ENCODE measurements at regions of chr16 and their contacts with region 1.

Region 1: DNA sequence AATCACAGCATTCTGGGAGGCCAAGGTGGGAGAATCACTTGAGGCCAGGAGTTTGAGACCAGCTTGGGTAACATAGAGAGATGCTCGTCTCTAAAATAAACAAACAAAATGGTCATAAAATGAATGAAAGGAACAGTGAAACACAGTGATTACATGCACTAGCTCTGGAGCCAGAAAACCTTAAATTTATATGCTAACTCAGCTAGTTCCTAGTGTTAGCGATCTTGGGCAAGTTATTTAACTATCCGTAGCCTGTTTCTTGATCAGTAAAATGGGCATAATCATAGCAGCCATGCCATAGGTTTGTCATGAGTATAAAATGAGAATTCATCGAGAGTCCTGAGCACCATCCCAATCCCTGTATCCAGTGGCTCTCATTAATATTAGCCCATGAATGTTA is 271.0 kb downstream of the GRIN2A start:
- DNase-seq: no peak
- ATAC-seq: no peak
- H3K4me3 Mint-ChIP-seq: no peak overlapping the region
- H3K27ac Mint-ChIP-seq: no peak overlapping the region
- H3K4me1 Mint-ChIP-seq: no peaks in the 10 kb centered on the region
- H3K27me3 Mint-ChIP-seq: peaks cover 2% of the 10 kb centered on the region

Region 2: DNA sequence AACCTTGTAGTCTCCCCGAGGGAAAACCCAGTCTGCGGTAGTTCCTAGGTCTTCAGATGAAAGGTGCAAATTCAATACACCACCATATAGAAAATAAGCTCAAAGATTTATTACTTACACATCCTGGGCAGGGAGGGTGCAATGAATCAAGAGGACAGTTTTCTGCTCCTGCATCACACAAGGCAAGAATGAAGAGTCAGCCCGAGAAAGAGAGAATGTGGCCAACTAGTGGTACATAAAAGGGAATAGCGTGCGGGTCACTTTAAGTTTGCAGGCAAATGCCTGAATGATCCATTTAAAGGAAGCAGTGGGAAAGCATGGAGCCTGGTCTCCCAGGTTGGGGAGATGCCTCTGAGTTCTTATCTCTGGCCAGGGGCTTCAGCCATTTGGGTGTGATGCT is 132.4 kb before region 1 on chr16:
- CTCF ChIA-PET with region 1: no interaction called
- POLR2A ChIA-PET with region 1: no interaction called
- intact Hi-C with region 1: no loop called
- DNase-seq: no peak
- ATAC-seq: no peak
- H3K4me3 Mint-ChIP-seq: no peak overlapping the region
- H3K27ac Mint-ChIP-seq: no peak overlapping the region
- H3K4me1 Mint-ChIP-seq: no peaks in the 10 kb centered on the region
- H3K27me3 Mint-ChIP-seq: no peaks in the 10 kb centered on the region

Region 3: DNA sequence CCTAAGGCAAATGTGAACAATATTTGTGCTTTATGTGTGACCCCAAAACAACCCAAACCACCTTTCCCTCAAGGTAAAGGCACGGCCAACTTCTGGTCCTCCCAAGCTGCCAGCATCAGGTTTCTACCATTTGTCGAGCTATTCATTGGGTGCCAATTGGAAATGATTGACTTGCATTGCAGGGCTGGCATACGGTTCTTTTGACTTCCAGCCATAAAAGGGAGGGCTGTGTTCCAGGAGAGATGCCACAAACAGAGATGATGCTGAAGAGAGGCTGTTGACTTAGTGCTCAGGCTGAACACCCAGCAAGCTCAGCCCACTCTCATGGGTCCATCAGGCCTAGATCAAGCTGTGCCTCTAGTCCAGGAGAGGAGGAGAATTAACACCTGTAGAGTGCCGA is 18.6 kb after region 1 on chr16:
- CTCF ChIA-PET with region 1: interaction called, 5 read pairs
- POLR2A ChIA-PET with region 1: no interaction called
- intact Hi-C with region 1: loop called in 1 of 2 experiments (anchors 2 kb)
- DNase-seq: no peak
- ATAC-seq: no peak
- H3K4me3 Mint-ChIP-seq: no peak overlapping the region
- H3K27ac Mint-ChIP-seq: no peak overlapping the region
- H3K4me1 Mint-ChIP-seq: no peaks in the 10 kb centered on the region
- H3K27me3 Mint-ChIP-seq: peaks cover 6% of the 10 kb centered on the region